Calu3 (cell line): ENCODE measurements at regions of chr17 and their contacts with region 1.

Region 1: GRCh38 chr17:81309070-81309905 is 14.2 kb upstream of the SLC38A10 start:
- DNase-seq: peak; percentile 86
- H3K4me3 Mint-ChIP-seq: peak overlapping the region; percentile 58
- H3K27ac Mint-ChIP-seq: peak overlapping the region; percentile 64
- H3K4me1 Mint-ChIP-seq: peaks cover 18% of the 10 kb centered on the region
- H3K27me3 Mint-ChIP-seq: peaks cover 22% of the 10 kb centered on the region
- CTCF ChIP-seq: peak; percentile 43

Region 2: DNA sequence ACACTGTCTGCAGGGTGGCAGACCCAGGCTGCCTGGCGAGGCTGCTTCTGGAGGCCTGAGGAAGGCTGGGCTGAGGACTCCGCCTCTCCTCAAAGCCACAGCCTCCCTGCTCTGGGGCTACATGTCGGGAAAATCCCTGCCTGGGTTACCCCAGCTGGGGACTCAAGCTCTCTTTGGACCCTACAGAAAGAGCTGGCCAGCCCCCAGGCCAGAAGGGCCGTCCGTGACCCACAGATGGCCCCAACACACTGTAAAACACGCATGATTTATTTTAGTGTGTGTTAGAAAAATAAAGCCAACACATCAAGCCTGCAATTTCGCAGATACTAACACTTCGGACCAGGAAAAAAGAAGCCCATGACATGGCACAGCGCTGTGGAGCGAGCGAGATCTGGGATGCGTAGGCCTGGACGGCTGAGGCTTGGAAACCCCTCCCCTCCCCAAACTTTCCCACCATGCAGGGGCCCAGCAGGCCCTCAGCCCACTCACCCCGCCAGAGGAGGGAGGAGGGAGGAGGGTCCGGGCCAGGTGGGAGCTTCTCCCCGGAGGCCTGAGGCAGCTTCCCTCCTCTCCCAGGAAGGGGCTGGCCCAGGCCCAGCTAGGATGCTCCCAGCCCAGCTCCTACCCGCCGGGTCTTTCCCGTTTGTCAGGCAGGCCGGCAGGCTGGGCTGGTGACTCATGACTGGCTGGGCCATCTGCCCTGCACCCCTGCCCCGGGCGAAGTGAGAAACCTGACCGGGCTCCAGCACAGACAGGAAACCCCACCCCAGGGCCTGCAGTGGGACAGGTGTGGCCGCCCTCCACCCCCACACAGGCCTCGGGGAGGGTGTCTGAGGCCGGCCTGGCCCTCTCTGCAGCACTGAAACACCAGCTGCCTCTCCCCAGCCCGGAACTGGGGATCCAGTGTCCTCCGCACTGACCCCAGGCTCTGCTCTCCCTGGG is 20.0 kb after region 1 on chr17:
- CTCF ChIA-PET with region 1: interaction called, 15 read pairs
- intact Hi-C with region 1: no loop called
- DNase-seq: peak; percentile 98
- H3K4me3 Mint-ChIP-seq: peak overlapping the region; percentile 70
- H3K27ac Mint-ChIP-seq: peak overlapping the region; percentile 82
- H3K4me1 Mint-ChIP-seq: peaks cover 37% of the 10 kb centered on the region
- H3K27me3 Mint-ChIP-seq: no peaks in the 10 kb centered on the region
- CTCF ChIP-seq: no peak

Region 3: GRCh38 chr17:81359218-81359617 is 49.9 kb after region 1 on chr17:
- CTCF ChIA-PET with region 1: no interaction called
- intact Hi-C with region 1: no loop called
- DNase-seq: no peak
- H3K4me3 Mint-ChIP-seq: no peak overlapping the region
- H3K27ac Mint-ChIP-seq: no peak overlapping the region
- H3K4me1 Mint-ChIP-seq: peaks cover 25% of the 10 kb centered on the region
- H3K27me3 Mint-ChIP-seq: peaks cover 78% of the 10 kb centered on the region
- CTCF ChIP-seq: no peak